GM12878 (cell line): ENCODE measurements at regions of chr11 and their contacts with region 1.

Region 1: GRCh38 chr11:64331557-64332371 is 8.2 kb upstream of the CCDC88B start:
- DNase-seq: peak; percentile 80
- ATAC-seq: peak; percentile 80
- H3K4me3 ChIP-seq: no peak overlapping the region
- H3K27ac ChIP-seq: peak overlapping the region; percentile 52
- H3K4me1 ChIP-seq: peaks cover 21% of the 10 kb centered on the region
- H3K27me3 ChIP-seq: no peaks in the 10 kb centered on the region
- CTCF ChIP-seq: peak; percentile 78 to 86 (median 82)
- EP300 ChIP-seq: peak in 1 of 2 experiments; percentile 68; a peak in 1 of 4 replicates
- POLR2A ChIP-seq: peak; percentile 53; the same call in 1 of the 2 replicates
- RAD21 ChIP-seq: peak; percentile 53

Region 2: DNA sequence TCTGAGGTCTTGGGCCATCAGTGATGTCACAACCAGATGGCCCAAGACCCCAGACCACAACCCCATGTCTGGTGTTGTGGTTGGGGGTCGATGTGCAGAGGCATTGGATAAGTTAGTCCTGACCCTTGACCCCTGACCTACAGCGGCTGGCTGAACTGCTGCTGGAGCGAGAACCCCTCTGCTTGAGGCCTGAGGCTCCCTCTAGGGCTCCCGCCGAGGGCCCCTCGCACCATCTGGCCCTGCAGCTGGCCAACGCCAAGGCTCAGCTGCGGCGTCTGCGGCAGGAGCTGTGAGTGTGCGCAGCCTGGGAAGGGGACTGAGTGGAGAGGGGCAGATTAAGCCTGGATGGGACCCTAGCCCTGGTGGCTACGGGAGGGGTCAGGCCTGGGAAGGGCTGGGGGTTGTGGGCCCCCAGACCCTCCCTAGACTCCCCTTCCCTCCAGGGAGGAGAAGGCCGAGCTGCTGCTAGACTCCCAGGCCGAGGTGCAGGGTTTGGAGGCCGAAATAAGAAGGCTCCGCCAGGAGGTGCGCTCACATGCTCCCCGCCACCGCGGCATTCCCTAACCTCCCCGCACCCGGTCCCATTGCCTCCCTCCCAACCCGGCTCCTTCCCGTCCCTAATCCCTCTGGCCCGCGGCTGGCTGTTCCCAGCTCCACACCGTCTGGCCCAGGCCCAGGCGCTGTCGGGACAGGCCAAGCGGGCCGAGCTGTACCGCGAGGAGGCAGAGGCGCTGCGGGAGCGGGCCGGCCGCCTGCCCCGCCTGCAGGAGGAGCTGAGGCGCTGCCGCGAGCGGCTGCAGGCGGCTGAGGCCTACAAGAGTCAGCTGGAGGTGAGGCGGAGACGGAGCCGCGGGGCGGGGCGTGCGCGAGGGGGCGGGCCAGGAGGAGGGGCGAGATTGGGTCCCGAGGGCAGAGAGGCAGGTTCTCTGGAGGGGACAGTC is 10.4 kb after region 1 on chr11:
- CTCF ChIA-PET with region 1: interaction called, 15 read pairs
- POLR2A ChIA-PET with region 1: interaction called, 10 read pairs
- RAD21 ChIA-PET with region 1: interaction called, 8 read pairs
- SMC1A ChIA-PET with region 1: interaction called, 6 read pairs
- in situ Hi-C with region 1: no loop called
- intact Hi-C with region 1: no loop called
- DNase-seq: no peak
- ATAC-seq: peak; percentile 78
- H3K4me3 ChIP-seq: peak overlapping the region; percentile 45; the same call in 1 of the 2 replicates
- H3K27ac ChIP-seq: no peak overlapping the region
- H3K4me1 ChIP-seq: peaks cover 24% of the 10 kb centered on the region
- H3K27me3 ChIP-seq: no peaks in the 10 kb centered on the region
- CTCF ChIP-seq: peak; percentile 21 to 31 (median 29); a peak in 3 of 6 replicates
- EP300 ChIP-seq: no peak
- POLR2A ChIP-seq: peak; percentile 47; the same call in 1 of the 2 replicates
- RAD21 ChIP-seq: peak; percentile 23; the same call in 1 of the 2 replicates

Region 3: DNA sequence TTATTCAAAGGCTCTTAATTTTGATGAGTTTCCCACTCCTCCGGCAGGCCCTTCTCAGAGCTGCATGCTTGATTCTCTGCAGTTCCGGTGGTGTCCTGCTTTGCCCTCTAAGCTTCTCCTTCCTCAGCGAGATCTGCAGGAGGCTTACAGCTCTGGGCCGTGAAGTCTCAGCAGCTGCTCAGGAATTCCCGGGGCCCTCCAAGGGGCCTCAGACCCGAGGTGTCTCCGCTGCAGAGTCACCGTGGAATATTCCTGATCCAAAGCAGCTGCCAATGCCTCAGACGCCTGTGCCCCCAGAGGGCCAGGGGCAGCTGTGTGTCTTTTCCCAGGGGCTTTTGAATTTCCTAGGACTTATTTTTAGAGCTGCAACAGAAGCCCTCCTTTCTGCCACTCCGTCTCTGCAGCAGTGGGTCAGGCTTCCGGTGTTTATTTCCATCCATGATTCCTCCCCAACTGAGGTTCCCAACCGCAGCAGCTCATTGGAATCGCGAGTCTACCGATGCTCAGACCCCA is 64.4 kb after region 1 on chr11:
- CTCF ChIA-PET with region 1: no interaction called
- POLR2A ChIA-PET with region 1: no interaction called
- RAD21 ChIA-PET with region 1: no interaction called
- SMC1A ChIA-PET with region 1: no interaction called
- in situ Hi-C with region 1: no loop called
- intact Hi-C with region 1: no loop called
- DNase-seq: no peak
- ATAC-seq: no peak
- H3K4me3 ChIP-seq: no peak overlapping the region
- H3K27ac ChIP-seq: no peak overlapping the region
- H3K4me1 ChIP-seq: no peaks in the 10 kb centered on the region
- H3K27me3 ChIP-seq: no peaks in the 10 kb centered on the region; a peak in 1 of 4 replicates
- CTCF ChIP-seq: no peak
- EP300 ChIP-seq: no peak
- POLR2A ChIP-seq: no peak
- RAD21 ChIP-seq: no peak